ENCODE measurements at regions of chr17 and their contacts with region 1.

Region 1: DNA sequence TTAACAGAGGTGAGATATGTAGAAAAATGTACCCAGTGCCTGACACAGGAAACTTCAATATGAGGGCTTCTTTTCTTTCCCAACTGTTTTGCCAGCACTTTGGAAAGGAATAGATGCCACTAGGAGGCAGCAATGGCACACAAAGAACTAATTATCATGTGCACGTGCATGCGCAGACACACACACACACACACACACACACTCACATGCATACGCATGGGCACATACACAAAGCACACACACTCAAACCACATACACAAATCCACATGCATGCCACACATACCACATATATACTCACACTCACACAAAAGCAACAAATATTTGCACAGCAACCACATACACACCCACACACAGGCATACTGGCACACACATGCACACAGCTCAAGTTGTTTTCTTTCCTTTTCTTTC is 8.8 kb upstream of the CEP112 start:
- DNase-seq: peak; percentile 14
- H3K4me3 Mint-ChIP-seq: no peak overlapping the region
- H3K27ac Mint-ChIP-seq: no peak overlapping the region
- H3K4me1 Mint-ChIP-seq: peaks cover 12% of the 10 kb centered on the region
- H3K27me3 Mint-ChIP-seq: peaks cover 7% of the 10 kb centered on the region

Region 2: DNA sequence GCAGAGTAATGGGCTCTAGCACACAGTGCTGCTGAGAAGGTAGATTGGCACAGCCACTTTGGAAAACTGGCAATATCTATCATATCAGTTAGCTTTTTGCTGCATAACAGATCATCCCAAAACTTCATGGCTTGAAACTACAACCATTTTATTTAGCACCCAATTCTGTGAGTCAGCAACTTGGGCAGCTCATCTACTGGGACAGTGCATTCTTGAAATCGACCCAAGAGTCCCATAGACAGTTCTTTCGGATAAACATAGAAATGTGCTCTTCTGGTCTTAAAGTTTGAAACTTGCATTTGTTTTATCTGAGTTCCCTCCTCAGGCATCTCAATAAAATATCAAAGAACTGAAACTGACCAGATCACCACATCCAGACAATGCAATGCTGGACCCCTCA is 85.4 kb before region 1 on chr17:
- intact Hi-C with region 1: no loop called
- DNase-seq: no peak
- H3K4me3 Mint-ChIP-seq: no peak overlapping the region
- H3K27ac Mint-ChIP-seq: no peak overlapping the region
- H3K4me1 Mint-ChIP-seq: no peaks in the 10 kb centered on the region
- H3K27me3 Mint-ChIP-seq: peaks cover 3% of the 10 kb centered on the region

Region 3: GRCh38 chr17:66420961-66421371 is 220.3 kb after region 1 on chr17:
- intact Hi-C with region 1: loop called (anchors 1 kb)
- DNase-seq: no peak
- H3K4me3 Mint-ChIP-seq: no peak overlapping the region
- H3K27ac Mint-ChIP-seq: peak overlapping the region; percentile 62
- H3K4me1 Mint-ChIP-seq: peaks cover 62% of the 10 kb centered on the region
- H3K27me3 Mint-ChIP-seq: no peaks in the 10 kb centered on the region

Region 4: GRCh38 chr17:66426397-66427033 is 225.8 kb after region 1 on chr17:
- intact Hi-C with region 1: loop called (anchors 1 kb)
- DNase-seq: peak; percentile 48
- H3K4me3 Mint-ChIP-seq: peak overlapping the region; percentile 23
- H3K27ac Mint-ChIP-seq: peak overlapping the region; percentile 66
- H3K4me1 Mint-ChIP-seq: peaks cover 65% of the 10 kb centered on the region
- H3K27me3 Mint-ChIP-seq: no peaks in the 10 kb centered on the region

Region 5: DNA sequence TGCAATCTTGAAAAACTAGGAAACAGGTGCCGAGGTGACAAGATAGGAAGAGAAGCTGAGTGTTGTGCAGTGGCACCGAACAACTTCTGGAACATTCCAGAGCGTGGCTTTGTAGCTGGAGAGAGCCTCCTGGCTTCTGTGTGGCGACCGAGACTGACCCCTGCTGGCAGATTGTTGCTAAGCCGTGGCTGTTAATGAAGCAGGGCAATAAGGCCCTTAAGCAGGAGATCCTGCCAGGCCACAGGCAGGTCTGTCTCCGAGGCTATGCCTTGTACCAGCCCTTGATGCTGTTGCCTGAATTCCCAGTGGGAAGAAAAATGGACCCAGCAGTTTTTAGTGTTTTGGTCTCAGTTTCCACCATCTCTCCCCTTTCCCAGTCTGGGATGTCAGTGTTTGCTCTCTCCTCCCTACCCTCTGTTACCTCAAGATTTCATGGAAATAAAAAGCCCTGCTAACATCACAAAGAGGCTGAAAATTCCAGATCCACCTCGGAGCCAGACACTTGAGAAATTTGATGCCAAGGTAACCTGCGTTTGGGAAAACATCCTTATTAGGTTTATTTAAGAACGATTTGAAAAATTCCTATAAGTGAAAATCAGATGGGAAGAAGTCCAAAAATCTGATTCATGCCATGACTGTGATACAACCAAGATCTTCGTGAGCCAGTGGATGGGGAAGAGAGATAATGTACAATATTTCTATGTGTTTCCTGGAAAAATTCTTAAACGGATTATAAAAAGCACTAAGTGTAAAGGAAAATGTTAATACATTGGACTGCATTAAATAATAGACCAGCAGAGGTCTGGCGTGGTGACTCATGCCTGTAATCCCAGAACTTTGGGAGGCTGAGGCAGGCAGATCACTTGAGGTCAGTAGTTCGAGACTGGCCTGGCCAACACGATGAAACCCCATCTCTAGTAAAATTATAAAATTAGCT is 366.8 kb after region 1 on chr17:
- intact Hi-C with region 1: loop called (anchors 2 kb)
- DNase-seq: peak; percentile 63
- H3K4me3 Mint-ChIP-seq: no peak overlapping the region
- H3K27ac Mint-ChIP-seq: peak overlapping the region; percentile 25
- H3K4me1 Mint-ChIP-seq: peaks cover 37% of the 10 kb centered on the region
- H3K27me3 Mint-ChIP-seq: no peaks in the 10 kb centered on the region

Region 6: GRCh38 chr17:66625311-66625775 is 424.7 kb after region 1 on chr17:
- intact Hi-C with region 1: loop called (anchors 2 kb)
- DNase-seq: no peak
- H3K4me3 Mint-ChIP-seq: no peak overlapping the region
- H3K27ac Mint-ChIP-seq: no peak overlapping the region
- H3K4me1 Mint-ChIP-seq: peaks cover 42% of the 10 kb centered on the region
- H3K27me3 Mint-ChIP-seq: no peaks in the 10 kb centered on the region

Region 7: DNA sequence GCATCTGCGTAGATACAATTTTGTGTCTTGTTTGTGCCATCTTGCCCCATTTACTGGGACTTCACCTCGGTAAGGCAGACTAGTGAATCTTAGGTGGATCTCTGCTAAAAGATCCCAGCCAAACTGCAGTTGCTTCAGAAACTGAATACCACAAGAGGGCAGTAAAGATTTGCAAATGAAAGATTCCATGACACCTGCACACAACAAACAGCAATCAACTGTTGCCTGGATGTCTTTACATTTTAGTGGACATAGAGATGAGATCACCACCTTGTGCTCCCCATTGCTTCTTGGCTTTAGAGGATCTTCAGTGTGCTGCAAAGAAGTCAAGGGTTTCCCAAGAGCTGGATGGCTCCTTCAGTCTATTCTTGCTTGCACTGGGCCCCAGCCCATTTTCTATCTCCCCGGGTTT is 515.1 kb after region 1 on chr17:
- intact Hi-C with region 1: loop called (anchors 5 kb)
- DNase-seq: no peak
- H3K4me3 Mint-ChIP-seq: no peak overlapping the region
- H3K27ac Mint-ChIP-seq: peak overlapping the region; percentile 72
- H3K4me1 Mint-ChIP-seq: peaks cover 54% of the 10 kb centered on the region
- H3K27me3 Mint-ChIP-seq: no peaks in the 10 kb centered on the region

Region 8: GRCh38 chr17:66906321-66907278 is 705.9 kb after region 1 on chr17:
- intact Hi-C with region 1: loop called (anchors 1 kb)
- DNase-seq: peak; percentile 33
- H3K4me3 Mint-ChIP-seq: no peak overlapping the region
- H3K27ac Mint-ChIP-seq: no peak overlapping the region
- H3K4me1 Mint-ChIP-seq: peaks cover 9% of the 10 kb centered on the region
- H3K27me3 Mint-ChIP-seq: no peaks in the 10 kb centered on the region

Measured in activated T-helper 1 cell treated with anti-CD3 and anti-CD28 coated beads, Interleukin-12 subunit alpha, Interleukin-12 subunit beta, Interleukin-2, Interleukin-4 antibody, amounts not matched to agents 30 ng/mL and 10 ng/mL and 1 ng/mL, durations not matched to agents 14 hours and 24 hours and 36 hours (primary cell).